H1 (cell line): ENCODE measurements at regions of chr3 and their contacts with region 1.

Region 1: DNA sequence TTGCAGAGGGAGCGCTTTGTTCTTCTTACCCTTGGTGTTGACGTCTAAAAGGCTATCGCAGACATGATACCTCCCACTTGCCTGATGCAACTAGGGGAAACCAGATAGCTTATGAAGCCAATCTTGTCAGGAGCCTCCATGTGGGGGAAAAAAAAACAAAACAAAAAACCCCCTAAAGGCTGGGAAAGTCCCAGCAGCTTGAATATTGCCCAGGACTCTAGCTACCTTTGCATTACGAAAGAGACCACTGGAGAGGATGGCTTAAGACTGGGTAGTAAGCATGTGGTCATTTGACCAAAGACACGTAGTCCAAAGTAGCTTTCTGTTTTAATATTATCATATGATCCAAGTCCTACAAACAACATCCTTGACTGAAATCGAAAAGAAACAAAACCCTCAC is 120.7 kb upstream of the WNT5A start:
- DNase-seq: no peak
- H3K4me3 ChIP-seq: no peak overlapping the region
- H3K27ac ChIP-seq: no peak overlapping the region
- H3K4me1 ChIP-seq: peaks cover 3 to 8% (median 6%) of the 10 kb centered on the region in 4 experiments; a peak in 5 of 7 replicates
- H3K27me3 ChIP-seq: no peaks in the 10 kb centered on the region
- CTCF ChIP-seq: no peak
- EP300 ChIP-seq: no peak
- POLR2A ChIP-seq: no peak
- RAD21 ChIP-seq: no peak

Region 2: DNA sequence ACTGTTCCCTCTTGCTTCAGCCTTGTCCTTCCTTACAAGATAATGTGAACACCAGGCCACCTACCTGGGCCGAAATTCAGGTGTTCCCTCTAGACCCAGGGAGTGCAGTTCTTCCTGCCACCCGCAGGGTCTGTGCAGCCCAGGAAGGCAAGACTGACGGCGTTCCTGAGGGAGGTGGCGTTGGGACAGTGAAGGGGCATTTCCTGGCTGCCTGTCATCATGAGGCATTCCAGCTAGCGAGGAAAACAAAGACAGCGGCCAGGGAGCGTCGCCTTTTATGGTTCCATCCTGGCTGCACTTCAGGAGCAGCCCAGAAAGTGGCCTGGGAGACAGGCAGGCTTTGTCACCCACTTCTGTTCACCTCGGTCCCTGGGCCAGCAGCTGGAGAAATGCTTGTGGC is 35.9 kb before region 1 on chr3:
- CTCF ChIA-PET with region 1: interaction called, 10 read pairs
- POLR2A ChIA-PET with region 1: no interaction called
- DNase-seq: peak; percentile 73 to 88
- H3K4me3 ChIP-seq: no peak overlapping the region
- H3K27ac ChIP-seq: peak overlapping the region; percentile 38; the same call in 1 of the 2 replicates
- H3K4me1 ChIP-seq: peaks cover 8 to 22% (median 18%) of the 10 kb centered on the region in 4 experiments
- H3K27me3 ChIP-seq: no peaks in the 10 kb centered on the region; a peak in 1 of 7 replicates
- CTCF ChIP-seq: peak; percentile 28 to 60 (median 53); a peak in 3 of 4 replicates
- EP300 ChIP-seq: no peak
- POLR2A ChIP-seq: no peak
- RAD21 ChIP-seq: peak; percentile 35 to 50

Region 3: GRCh38 chr3:55591888-55592287 is 16.0 kb before region 1 on chr3:
- CTCF ChIA-PET with region 1: interaction called, 10 read pairs
- POLR2A ChIA-PET with region 1: interaction called, 3 read pairs
- DNase-seq: no peak
- H3K4me3 ChIP-seq: no peak overlapping the region
- H3K27ac ChIP-seq: no peak overlapping the region
- H3K4me1 ChIP-seq: peaks cover 9 to 25% (median 17%) of the 10 kb centered on the region in 4 experiments
- H3K27me3 ChIP-seq: no peaks in the 10 kb centered on the region
- CTCF ChIP-seq: no peak
- EP300 ChIP-seq: no peak
- POLR2A ChIP-seq: no peak
- RAD21 ChIP-seq: no peak

Region 4: GRCh38 chr3:55620351-55621025 is 12.6 kb after region 1 on chr3:
- CTCF ChIA-PET with region 1: interaction called, 10 read pairs
- POLR2A ChIA-PET with region 1: interaction called, 3 read pairs
- DNase-seq: no peak
- H3K4me3 ChIP-seq: no peak overlapping the region
- H3K27ac ChIP-seq: no peak overlapping the region
- H3K4me1 ChIP-seq: peaks cover 0 to 18% (median 8%) of the 10 kb centered on the region in 4 experiments; a peak in 4 of 7 replicates
- H3K27me3 ChIP-seq: no peaks in the 10 kb centered on the region
- CTCF ChIP-seq: no peak
- EP300 ChIP-seq: no peak
- POLR2A ChIP-seq: no peak
- RAD21 ChIP-seq: no peak

Region 5: GRCh38 chr3:55629432-55629831 is 21.6 kb after region 1 on chr3:
- CTCF ChIA-PET with region 1: interaction called, 23 read pairs
- POLR2A ChIA-PET with region 1: no interaction called
- DNase-seq: no peak
- H3K4me3 ChIP-seq: no peak overlapping the region
- H3K27ac ChIP-seq: no peak overlapping the region
- H3K4me1 ChIP-seq: peaks cover 0 to 2% (median 0%) of the 10 kb centered on the region in 4 experiments; a peak in 1 of 7 replicates
- H3K27me3 ChIP-seq: peaks cover 0 to 2% (median 0%) of the 10 kb centered on the region in 4 experiments; a peak in 1 of 7 replicates
- CTCF ChIP-seq: no peak
- EP300 ChIP-seq: no peak
- POLR2A ChIP-seq: no peak
- RAD21 ChIP-seq: no peak